GM13976 (cell line): ENCODE measurements at regions of chr1 and their contacts with region 1.

Region 1: DNA sequence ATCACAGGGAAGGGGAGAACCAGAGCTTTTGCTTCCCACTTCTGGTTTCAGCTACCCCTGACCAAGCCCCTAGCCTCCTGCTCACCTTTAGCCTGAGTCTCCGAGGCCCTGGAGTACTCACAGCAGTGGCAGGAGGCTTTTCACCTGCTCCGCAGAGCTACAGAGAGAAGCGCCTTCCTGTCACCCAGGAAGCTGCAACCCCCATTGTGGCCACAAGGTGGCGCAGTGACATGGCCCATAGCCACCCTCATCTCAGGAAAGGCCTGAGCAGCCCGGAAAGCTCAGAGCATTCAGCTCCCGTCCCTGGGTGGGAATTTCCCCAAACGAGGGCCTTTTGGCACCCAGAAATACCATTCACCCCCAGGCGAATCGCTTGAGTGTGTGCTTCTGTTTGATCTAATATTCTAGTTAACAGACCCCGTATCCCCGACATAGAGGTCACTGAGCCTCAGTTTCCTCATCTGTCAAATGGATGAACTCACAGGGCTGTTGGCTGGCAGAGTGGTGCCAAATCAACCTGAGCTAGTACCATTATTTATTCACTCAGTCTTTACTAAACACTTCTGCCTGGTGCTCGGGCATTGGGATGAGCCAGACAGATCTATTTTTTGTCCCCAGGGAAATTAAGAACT is 25.3 kb downstream of the A3GALT2 start:
- DNase-seq: peak; percentile 93
- CTCF ChIP-seq: peak; percentile 90

Region 2: GRCh38 chr1:33367485-33368405 is 72.2 kb after region 1 on chr1:
- in situ Hi-C with region 1: loop called (anchors 5 kb)
- DNase-seq: peak; percentile 94
- CTCF ChIP-seq: peak; percentile 92

Region 3: GRCh38 chr1:33378976-33379375 is 83.4 kb after region 1 on chr1:
- in situ Hi-C with region 1: no loop called
- DNase-seq: no peak
- CTCF ChIP-seq: no peak

Region 4: GRCh38 chr1:33466159-33466558 is 170.6 kb after region 1 on chr1:
- in situ Hi-C with region 1: loop called (anchors 5 kb)
- DNase-seq: no peak
- CTCF ChIP-seq: no peak

Region 5: DNA sequence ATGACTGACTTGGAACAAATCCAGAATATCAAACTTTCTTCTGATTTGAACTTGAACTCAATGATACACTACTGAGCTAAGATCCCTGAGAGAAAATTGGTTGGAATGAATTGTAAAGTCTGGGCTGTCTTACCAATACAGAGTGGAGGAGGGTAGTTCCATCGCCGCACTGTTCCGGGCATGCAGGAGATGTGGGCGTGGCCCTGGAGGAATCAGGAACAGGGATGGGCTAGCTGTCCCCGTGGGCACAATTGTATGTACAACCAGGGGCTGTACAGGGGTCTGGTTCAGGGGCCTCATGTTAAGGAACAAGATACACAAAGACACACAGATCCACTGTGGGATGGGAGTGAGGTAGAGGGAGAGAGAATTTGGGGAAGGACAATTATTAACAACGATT is 321.2 kb after region 1 on chr1:
- in situ Hi-C with region 1: loop called (anchors 10 kb)
- DNase-seq: no peak
- CTCF ChIP-seq: no peak